Psoas muscle (tissue), 8 donors: ENCODE measurements at regions of chr3 and their contacts with region 1.

Region 1: DNA sequence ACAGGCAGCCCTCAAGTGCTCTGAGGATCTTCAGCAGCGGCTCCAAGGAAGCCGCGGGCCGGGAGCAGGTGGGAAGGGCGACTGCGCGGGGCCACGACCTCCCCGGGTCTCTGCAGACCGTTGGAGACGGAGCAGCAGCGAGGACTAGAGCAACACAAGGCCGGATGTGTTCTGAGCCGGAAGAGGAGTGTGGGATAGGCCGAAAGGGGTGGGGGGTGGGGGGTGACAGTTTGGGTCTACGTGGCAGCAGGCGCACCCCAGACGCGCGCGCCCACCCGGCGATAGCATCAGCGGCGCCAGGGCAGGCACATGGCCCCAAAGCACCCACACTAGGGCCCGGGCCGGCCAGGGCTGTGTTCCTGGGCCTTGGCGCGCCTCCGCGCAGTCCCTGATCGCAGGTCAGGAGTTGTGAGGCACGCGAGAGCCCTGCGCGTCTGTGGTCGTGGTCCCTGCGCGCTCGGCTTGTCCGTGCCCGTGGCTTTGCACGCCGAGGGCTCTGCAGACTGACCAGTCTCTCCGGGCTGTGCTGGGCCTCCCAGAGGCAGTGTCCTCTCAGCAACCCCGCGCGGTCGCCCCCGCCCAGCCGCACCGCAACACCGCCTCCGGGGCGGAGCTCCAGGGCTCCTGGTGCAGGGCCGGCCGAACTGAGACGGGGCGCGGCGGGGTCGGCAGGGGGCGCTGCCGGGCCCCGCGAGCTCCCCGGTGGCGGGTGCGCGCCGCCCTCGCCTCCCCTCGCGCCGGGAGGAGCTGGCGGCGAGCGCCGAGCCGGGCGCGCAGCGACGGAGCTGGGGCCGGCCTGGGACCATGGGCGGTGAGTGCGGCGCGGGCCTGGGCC is at the start of gene PXYLP1:
- DNase-seq: peak; percentile 96 to 97
- ATAC-seq: peak; percentile 95 to 97 (median 96)
- H3K4me3 ChIP-seq: peak within 1 kb of the TSS; percentile 84
- H3K27ac ChIP-seq: peak within 1 kb of the TSS; percentile 81
- H3K4me1 ChIP-seq: peaks cover 2% of the 10 kb centered on the region
- H3K27me3 ChIP-seq: no peaks in the 10 kb centered on the region
- CTCF ChIP-seq: peak; percentile 90
- total RNA-seq, gene PXYLP1: 1.8 to 6.8 (median 4.0) TPM

Region 2: DNA sequence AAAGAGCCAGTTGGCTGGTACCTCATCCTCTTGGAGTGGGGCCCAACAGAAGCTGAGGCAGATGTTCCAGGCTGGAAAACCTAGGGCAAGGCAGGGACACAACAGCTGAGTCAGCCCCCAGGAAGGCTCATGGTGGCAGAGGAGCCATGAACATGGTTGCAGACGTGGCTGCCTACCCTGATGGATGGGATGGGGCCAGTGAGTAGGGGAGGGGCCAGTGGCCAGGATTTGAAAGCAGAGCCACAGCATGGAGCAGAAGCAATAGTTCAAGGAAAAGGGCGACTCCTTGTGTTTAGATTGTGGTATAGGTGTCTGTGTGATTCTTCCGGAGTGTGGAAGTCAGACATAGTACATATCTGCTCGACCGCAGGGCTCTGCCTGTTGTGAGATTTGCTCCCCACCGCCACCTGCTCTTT is 24.5 kb after region 1 on chr3:
- intact Hi-C with region 1: loop called in 1 of 2 experiments (anchors 2 kb)
- DNase-seq: no peak
- ATAC-seq: peak; percentile 89 to 96 (median 92)
- H3K4me3 ChIP-seq: no peak overlapping the region
- H3K27ac ChIP-seq: no peak overlapping the region
- H3K4me1 ChIP-seq: peaks cover 4% of the 10 kb centered on the region
- H3K27me3 ChIP-seq: no peaks in the 10 kb centered on the region
- CTCF ChIP-seq: peak; percentile 57

Region 3: GRCh38 chr3:141279077-141279967 is 48.0 kb after region 1 on chr3:
- intact Hi-C with region 1: loop called (anchors 2 kb)
- DNase-seq: no peak
- ATAC-seq: peak; percentile 65 to 90 (median 69)
- H3K4me3 ChIP-seq: no peak overlapping the region
- H3K27ac ChIP-seq: no peak overlapping the region
- H3K4me1 ChIP-seq: peaks cover 5% of the 10 kb centered on the region
- H3K27me3 ChIP-seq: no peaks in the 10 kb centered on the region
- CTCF ChIP-seq: peak; percentile 69